ENCODE measurements at regions of chr15 and their contacts with region 1.

Region 1: GRCh38 chr15:50523851-50524251 is 22.6 kb downstream of the USP50 start:
- DNase-seq: no peak
- H3K4me3 ChIP-seq: no peak overlapping the region
- H3K27ac ChIP-seq: no peak overlapping the region
- H3K4me1 ChIP-seq: no peaks in the 10 kb centered on the region
- H3K27me3 ChIP-seq: no peaks in the 10 kb centered on the region
- CTCF ChIP-seq: no peak

Region 2: GRCh38 chr15:50219820-50220219 is 304.0 kb before region 1 on chr15:
- CTCF ChIA-PET with region 1: interaction called, 12 read pairs
- POLR2A ChIA-PET with region 1: no interaction called
- intact Hi-C with region 1: no loop called
- DNase-seq: peak; percentile 22 to 96
- H3K4me3 ChIP-seq: 0 out of 2 replicates have a peak overlapping the region, but pooled peaks have one; percentile 8
- H3K27ac ChIP-seq: peak overlapping the region; percentile 100
- H3K4me1 ChIP-seq: peaks cover 37% of the 10 kb centered on the region
- H3K27me3 ChIP-seq: no peaks in the 10 kb centered on the region
- CTCF ChIP-seq: no peak

Region 3: DNA sequence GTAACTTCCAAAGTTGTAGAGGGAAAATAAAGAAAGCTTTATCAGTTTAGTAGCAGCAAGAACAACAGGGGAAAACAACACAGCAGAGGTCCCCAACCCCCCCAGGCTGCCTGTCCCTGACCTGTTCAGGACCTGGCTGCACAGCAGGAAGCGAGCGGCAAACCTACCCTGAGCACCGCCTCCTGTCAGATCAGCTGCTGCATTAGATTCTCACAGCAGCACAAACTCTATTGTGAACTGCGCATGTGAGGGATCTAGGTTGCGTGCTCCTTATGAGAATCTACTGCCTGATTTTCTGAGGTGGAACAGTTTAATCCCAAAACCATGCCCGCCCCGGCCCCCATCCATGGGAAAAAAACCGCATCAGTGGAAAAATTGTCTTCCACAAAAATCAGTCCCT is 17.7 kb before region 1 on chr15:
- CTCF ChIA-PET with region 1: no interaction called
- POLR2A ChIA-PET with region 1: no interaction called
- intact Hi-C with region 1: no loop called
- DNase-seq: no peak
- H3K4me3 ChIP-seq: no peak overlapping the region
- H3K27ac ChIP-seq: no peak overlapping the region
- H3K4me1 ChIP-seq: no peaks in the 10 kb centered on the region
- H3K27me3 ChIP-seq: no peaks in the 10 kb centered on the region
- CTCF ChIP-seq: no peak